ENCODE measurements at regions of chrX and their contacts with region 1.

Region 1: DNA sequence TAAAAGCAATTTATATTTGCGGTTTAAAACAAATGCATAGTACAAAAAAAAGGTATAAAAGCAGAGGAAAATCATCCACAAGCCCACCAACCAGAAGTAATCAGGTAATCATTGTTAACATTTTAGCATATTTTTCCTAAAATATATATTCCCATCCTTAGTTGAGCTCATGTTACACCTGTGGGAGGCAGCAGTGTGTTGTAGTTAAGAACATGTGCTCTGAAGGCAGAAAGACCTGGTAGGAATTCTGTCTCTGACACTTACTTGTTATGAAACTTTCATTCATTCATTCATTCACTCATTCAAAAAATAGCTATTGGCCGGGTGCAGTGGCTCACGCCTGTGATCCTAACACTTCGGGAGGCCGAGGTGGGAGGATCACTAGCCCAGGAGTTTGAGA is 15.4 kb upstream of the CDKL5 start:
- DNase-seq: no peak
- H3K4me3 ChIP-seq: no peak overlapping the region
- CTCF ChIP-seq: peak; percentile 12

Region 2: DNA sequence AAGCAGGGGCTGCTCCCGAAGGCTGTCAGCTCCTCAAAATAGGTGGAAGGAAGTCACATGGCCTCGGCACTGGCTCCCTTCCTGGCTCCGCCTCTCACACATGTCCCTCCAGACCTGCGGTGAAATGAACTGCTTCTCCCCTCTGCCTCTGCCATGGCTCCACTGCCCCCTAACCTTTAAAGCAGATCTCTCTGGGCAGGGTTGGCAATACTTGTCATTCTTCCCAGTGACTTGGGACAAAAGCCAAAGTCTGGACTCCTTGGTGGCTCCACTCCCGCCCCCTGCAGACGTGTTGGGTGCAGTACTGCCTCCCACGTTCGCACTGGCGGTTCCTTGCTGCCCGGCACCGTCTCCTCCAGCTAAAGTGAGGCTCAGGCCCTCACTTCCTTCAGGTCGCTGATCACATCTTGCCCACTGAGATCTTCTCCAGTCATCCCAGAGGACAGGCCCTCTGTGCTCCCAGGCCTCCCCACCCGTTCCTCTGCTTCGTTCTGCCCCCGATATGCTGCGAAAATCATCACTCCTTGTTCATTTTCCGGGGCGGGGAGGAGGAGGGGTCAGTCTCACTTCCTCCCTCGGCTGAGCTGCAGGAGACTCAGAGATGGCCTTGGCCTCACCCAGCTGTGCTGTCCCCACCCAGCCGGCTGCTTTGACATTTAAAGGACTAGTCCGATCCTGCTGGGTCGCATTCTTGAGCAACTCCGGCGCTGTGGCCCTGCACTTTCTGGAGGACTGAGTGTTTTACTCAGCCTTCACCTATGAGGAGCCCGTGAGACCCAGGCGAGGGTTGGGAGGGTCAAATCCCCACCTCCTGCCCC is 476.5 kb after region 1 on chrX:
- CTCF ChIA-PET with region 1: interaction called, 11 read pairs
- POLR2A ChIA-PET with region 1: no interaction called
- DNase-seq: no peak
- H3K4me3 ChIP-seq: peak overlapping the region; percentile 23
- CTCF ChIP-seq: peak; percentile 55

Measured in AG04449 (cell line).